HepG2 (cell line): ENCODE measurements at regions of chr5 and their contacts with region 1.

Region 1: GRCh38 chr5:150350524-150351344 is 6.8 kb upstream of the TCOF1 start:
- DNase-seq: peak; percentile 91
- ATAC-seq: peak; percentile 98
- H3K4me3 ChIP-seq: peak overlapping the region in 1 of 3 experiments; percentile 11; a peak in 1 of 6 replicates
- H3K27ac ChIP-seq: no peak overlapping the region
- H3K4me1 ChIP-seq: peaks cover 61% of the 10 kb centered on the region
- H3K27me3 ChIP-seq: no peaks in the 10 kb centered on the region; a peak in 1 of 5 replicates
- CTCF ChIP-seq: peak; percentile 98
- EP300 ChIP-seq: peak in 1 of 2 experiments; percentile 41; a peak in 1 of 4 replicates
- POLR2A ChIP-seq: no peak
- RAD21 ChIP-seq: peak; percentile 93

Region 2: DNA sequence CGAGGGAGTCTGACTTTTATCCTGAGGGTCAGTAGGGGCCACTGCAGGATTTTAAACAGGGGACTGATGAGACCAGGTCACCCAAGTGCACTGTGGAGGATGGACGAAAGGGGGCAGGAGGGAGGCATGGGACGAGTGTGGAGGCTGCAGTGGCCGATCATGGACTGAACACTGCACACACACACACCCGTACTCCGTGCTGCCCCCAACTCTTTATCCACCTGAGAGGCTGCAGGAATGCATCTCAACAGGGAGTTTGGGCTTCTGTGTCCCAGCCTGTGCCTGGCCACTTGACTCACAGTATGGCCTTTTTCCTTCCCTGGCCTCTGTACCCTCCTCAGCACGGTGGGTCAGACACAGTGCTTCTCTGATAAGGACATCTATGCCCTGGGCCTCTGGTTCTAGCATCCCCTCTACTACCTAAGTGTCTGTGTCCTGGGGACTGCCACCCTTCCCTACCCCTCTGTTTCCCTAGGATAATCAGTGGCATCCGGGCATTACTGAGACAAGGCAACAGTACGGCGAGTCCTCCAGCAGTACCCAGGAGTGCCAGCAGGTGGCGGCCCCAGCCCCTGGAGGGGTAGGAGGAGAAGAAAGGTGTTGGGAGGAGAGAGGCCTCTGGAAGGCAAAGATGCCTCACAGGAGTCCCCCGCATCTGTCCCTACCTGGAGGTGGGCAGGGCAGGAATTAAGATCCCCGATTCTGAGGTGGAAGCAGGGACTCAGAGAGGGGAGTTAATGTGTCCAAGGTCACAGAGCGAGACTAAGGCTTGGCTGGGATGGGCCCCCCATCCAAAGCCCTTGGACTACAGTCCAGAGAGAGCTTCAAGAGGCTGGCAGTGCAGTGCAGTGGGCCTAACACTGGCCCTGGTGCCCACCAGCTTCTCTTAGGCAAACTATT is 189.2 kb before region 1 on chr5:
- CTCF ChIA-PET with region 1: no interaction called
- POLR2A ChIA-PET with region 1: no interaction called
- in situ Hi-C with region 1: no loop called
- intact Hi-C with region 1: loop called (anchors 5 kb)
- DNase-seq: peak; percentile 69
- ATAC-seq: peak; percentile 88
- H3K4me3 ChIP-seq: peak overlapping the region; percentile 29 to 73 (median 34); a peak in 5 of 6 replicates
- H3K27ac ChIP-seq: no peak overlapping the region
- H3K4me1 ChIP-seq: peaks cover 71% of the 10 kb centered on the region
- H3K27me3 ChIP-seq: peaks cover 1 to 2% of the 10 kb centered on the region in 2 experiments; a peak in 3 of 5 replicates
- CTCF ChIP-seq: peak; percentile 87
- EP300 ChIP-seq: no peak
- POLR2A ChIP-seq: no peak
- RAD21 ChIP-seq: peak; percentile 69

Region 3: DNA sequence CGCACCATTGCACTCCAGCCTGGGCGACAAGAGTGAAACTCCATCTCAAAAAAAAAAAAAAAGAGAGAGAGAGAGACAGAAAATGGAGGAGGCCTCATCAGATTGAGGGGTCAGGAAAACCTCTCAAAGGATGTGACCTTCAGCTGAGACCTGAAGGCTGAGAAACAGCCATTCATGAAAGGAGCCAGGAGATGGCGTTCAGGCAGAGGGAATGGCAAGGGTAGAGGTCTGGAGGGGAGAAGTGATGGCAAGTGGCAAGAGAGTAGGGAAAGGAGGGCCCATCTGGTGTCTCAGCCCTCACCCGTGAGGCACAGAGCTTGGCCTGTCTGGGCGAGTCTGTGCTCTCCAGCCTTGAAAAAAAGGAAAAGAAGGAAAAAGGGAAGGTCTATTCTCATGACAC is 78.2 kb before region 1 on chr5:
- CTCF ChIA-PET with region 1: interaction called, 21 read pairs
- POLR2A ChIA-PET with region 1: no interaction called
- in situ Hi-C with region 1: no loop called
- intact Hi-C with region 1: loop called (anchors 1 kb)
- DNase-seq: peak; percentile 55
- ATAC-seq: peak; percentile 86
- H3K4me3 ChIP-seq: no peak overlapping the region
- H3K27ac ChIP-seq: no peak overlapping the region
- H3K4me1 ChIP-seq: peaks cover 21% of the 10 kb centered on the region
- H3K27me3 ChIP-seq: peaks cover 3 to 34% of the 10 kb centered on the region in 2 experiments; a peak in 4 of 5 replicates
- CTCF ChIP-seq: peak; percentile 88
- EP300 ChIP-seq: no peak
- POLR2A ChIP-seq: no peak
- RAD21 ChIP-seq: peak; percentile 70

Region 4: DNA sequence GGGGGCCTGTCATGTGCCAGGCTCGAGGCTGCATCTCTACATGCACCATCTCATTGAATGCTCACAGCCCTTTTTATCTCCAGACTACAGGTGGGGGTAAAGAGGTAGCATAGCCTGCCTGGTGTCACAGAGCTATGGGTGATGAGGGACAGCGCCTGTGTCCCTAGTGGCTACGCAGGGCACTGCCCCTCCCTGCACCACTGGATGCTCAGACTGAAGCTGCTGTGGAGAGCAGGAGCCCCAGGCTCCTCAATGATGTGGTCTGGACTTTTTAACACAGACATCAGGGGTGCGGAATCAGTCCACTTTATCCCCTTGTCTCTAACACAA is 63.9 kb before region 1 on chr5:
- CTCF ChIA-PET with region 1: no interaction called
- POLR2A ChIA-PET with region 1: no interaction called
- in situ Hi-C with region 1: no loop called
- intact Hi-C with region 1: loop called (anchors 1 kb)
- DNase-seq: peak; percentile 73
- ATAC-seq: peak; percentile 100
- H3K4me3 ChIP-seq: no peak overlapping the region
- H3K27ac ChIP-seq: no peak overlapping the region
- H3K4me1 ChIP-seq: no peaks in the 10 kb centered on the region
- H3K27me3 ChIP-seq: peaks cover 2 to 56% of the 10 kb centered on the region in 2 experiments; a peak in 4 of 5 replicates
- CTCF ChIP-seq: peak; percentile 72
- EP300 ChIP-seq: no peak
- POLR2A ChIP-seq: no peak
- RAD21 ChIP-seq: peak; percentile 79

Region 5: DNA sequence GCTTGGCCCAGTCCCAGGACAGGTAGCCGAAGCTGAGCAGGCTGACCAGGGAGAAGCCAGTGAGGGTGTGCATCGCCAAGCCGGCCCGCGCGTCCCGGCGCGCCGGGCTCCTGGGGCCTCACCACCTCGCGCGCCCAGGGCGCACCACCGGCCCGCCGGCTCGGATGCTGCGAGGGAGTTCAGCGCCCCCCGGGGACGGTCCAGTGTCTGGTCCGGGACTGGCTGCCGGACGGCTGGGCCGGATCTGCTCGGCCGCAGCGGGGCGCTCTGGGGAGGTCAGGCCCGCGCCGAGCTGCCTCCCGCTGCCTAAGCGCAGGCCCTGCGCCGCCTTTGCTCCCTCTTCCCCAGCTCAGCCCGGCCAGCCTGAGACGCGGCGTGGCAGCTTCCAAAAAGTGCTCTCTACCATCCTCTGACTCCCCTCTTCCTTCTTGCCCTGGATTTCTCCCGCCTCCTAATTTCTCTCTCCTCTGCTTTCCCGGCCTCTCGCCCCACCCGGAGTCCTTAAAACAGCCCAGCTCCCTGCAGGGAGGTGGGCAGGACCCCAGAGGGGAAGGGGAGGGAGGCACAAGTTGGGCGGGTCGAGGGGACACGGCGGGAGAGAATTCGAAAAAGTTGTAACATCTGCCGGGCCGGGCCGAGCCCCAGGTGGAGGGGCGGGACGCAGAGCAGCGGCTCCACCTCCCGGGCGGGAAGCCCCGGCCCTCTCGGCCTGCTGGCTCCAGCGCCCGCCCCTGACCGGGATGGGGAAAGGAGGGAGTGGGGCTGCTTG is 48.2 kb before region 1 on chr5 and contains the start of gene ARSI:
- CTCF ChIA-PET with region 1: interaction called, 13 read pairs
- POLR2A ChIA-PET with region 1: interaction called, 5 read pairs
- in situ Hi-C with region 1: no loop called
- intact Hi-C with region 1: loop called (anchors 1 kb)
- DNase-seq: no peak
- ATAC-seq: peak; percentile 92
- H3K4me3 ChIP-seq: peak within 1 kb of the TSS; percentile 66 to 78 (median 72)
- H3K27ac ChIP-seq: no peak within 1 kb of the TSS
- H3K4me1 ChIP-seq: peaks cover 78% of the 10 kb centered on the region
- H3K27me3 ChIP-seq: no peaks in the 10 kb centered on the region
- CTCF ChIP-seq: peak; percentile 76
- EP300 ChIP-seq: no peak
- POLR2A ChIP-seq: no peak
- RAD21 ChIP-seq: peak; percentile 63
- total RNA-seq, gene ARSI: 17.6 and 33.9 TPM in 2 replicates